ENCODE measurements at regions of chr17 and their contacts with region 1.

Region 1: DNA sequence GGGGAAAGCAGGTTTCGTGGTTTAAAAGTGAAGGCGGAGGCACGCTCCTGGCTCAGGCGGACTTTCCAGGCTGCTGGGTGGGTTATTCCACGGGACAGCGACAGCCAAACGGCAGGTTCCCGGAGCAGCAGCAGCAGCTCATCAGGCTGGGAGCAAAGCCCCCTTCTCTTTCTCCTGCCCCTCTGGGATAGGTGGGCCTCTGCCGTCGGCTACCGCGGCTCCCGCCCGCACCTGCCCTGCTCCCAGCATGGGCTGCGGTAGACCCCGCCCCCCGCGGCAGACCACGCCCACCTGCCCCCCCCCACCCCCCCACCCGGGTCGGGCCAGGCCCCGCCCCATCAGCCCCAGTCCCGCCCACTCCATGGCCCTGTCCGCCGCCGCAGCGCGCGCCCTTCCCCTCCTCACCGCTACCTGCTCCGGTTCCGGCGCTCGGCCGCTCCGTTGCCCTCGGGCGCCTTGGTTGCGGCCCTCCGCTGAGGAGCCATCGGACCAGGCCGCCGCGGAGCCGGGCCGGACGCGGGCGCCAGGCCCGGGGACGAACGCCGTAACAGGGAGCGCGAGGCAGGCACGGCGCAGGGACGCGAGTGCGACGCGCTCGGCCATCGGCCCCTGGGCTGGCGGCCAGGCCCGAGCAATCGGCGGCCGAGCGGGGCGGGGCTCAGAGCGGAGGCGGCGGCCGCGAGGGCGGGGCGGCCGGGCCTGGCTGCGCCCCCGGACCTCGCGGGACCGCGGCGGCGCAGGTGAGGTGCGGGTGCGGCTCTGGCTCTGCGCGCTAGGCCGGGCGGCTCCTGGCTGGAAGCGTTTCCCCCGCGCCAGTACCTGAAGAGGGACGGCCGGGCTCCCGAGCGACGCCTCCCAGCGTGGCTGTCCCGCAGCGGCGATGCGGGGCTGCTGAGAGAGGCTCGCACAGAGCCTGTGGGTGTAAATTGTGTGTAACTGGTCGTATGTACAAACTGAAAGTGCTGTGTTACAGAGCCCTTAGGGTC is at the starts of genes HEXD and OGFOD3:
- DNase-seq: peak; percentile 89
- H3K4me3 ChIP-seq: peak within 1 kb of the TSS; percentile 88 to 97 (median 88)
- H3K27ac ChIP-seq: peak within 1 kb of the TSS; percentile 71
- H3K4me1 ChIP-seq: peaks cover 13% of the 10 kb centered on the region
- H3K27me3 ChIP-seq: no peaks in the 10 kb centered on the region
- CTCF ChIP-seq: no peak
- total RNA-seq, gene HEXD: 6.3 to 13.0 TPM
- total RNA-seq, gene OGFOD3: 18.5 to 25.6 TPM

Region 2: DNA sequence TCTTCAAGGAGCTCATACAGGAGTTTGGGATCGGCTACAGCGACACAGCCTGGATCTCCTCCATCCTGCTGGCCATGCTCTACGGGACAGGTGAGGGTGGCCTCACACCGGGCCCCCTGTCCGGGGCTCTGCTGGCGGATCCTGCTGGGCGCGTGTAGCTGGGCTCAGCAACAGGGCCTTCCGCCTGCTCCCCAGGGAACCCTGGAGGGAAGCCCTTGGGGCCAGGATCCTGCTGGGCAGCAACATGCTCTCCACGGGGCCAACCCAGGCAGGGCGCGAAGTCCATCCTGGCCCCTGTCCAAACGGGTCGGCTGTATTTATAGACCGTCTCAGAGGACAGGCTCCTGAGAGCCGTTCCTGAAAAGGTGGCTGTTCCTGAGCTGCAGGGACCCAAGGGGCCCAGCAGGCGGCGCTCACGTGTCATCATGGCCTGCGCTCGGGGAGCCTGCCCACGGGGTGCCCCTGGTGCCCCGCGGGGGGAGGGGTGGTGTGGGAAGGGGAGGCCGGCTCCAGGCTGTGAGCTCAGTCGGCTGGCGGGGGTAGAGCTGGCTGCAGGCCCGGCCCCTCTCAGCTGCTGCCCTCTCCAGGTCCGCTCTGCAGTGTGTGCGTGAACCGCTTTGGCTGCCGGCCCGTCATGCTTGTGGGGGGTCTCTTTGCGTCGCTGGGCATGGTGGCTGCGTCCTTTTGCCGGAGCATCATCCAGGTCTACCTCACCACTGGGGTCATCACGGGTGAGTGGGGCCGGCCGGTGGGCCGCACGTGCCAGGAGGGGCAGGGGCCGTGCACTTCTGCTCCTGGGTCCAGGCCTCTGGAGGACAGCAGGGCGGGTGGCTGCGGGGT is 181.9 kb before region 1 on chr17:
- CTCF ChIA-PET with region 1: no interaction called
- dilution Hi-C with region 1: no loop called
- in situ Hi-C with region 1: no loop called
- intact Hi-C with region 1: loop called (anchors 1 kb)
- DNase-seq: peak; percentile 37
- H3K4me3 ChIP-seq: no peak overlapping the region
- H3K27ac ChIP-seq: no peak overlapping the region
- H3K4me1 ChIP-seq: peaks cover 82% of the 10 kb centered on the region
- H3K27me3 ChIP-seq: no peaks in the 10 kb centered on the region
- CTCF ChIP-seq: peak; percentile 67 to 84

Region 3: DNA sequence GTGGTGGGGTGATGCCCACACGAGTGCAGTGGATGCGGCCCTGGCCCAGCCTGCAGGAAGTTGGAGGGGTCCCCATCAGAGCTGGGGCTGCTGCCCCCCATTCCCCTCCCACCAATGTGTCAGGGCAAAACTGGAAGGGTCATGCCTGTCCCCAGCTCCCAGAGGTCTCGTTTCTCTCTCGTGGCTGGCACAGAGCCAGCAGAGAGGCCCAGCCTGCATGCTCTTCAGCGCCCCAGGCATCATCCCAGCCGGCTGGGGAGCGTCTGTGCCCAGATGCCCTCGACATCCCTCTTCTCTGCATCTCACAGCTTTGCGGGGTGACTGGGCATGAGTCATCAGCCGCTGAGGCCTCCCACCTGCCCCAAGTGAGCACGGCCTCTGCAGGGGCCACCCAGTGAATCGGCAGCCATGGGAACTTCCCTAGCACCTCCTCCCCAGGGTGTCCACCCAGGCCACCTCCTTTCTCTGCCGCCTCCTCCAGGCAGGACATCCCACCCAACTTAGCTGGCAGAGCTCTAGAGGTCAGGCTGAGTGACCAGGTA is 135.0 kb before region 1 on chr17:
- CTCF ChIA-PET with region 1: no interaction called
- dilution Hi-C with region 1: no loop called
- in situ Hi-C with region 1: no loop called
- intact Hi-C with region 1: no loop called
- DNase-seq: peak; percentile 94
- H3K4me3 ChIP-seq: no peak overlapping the region
- H3K27ac ChIP-seq: peak overlapping the region; percentile 49
- H3K4me1 ChIP-seq: peaks cover 42% of the 10 kb centered on the region
- H3K27me3 ChIP-seq: no peaks in the 10 kb centered on the region
- CTCF ChIP-seq: no peak

Region 4: DNA sequence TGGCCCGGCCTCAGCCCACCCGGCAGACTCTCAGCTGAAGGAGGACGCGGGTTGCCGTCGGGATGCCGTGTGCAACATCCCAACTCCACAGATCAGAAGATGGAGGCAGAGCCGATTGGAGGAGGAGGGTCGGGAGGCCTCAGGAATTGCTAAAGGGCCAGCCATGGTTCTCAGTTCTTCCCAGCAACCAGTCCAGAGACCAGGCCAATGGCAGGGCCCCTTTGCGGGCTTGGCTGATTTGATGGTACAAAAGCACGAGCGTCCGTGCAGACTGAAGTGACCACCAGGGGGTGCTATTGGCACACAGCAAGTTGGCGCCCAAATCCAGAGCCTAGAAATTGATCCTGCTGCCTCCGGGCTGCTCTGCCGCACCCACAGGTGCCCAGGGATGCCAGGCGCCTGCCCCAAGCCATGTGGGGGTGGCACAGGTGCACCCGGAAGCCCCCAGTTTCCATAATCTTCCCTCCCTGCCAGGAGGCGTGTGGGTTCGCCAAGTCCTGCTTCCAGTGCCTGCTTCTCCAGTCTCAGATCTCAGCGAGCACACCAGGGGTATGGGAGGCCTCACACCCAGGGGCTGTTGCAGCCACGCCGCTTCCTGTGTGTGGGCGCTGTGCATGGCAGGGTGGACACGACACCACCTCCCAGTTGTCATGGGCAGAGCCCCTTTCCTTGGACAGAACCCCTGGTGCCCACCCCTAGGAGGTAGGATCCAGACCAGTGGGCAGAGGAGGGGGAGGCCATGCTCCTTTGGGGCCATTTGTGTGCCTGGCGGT is 66.4 kb before region 1 on chr17:
- CTCF ChIA-PET with region 1: no interaction called
- dilution Hi-C with region 1: no loop called
- in situ Hi-C with region 1: loop called in 1 of 2 experiments (anchors 10 kb)
- intact Hi-C with region 1: loop called (anchors 1 kb)
- DNase-seq: peak; percentile 64
- H3K4me3 ChIP-seq: no peak overlapping the region
- H3K27ac ChIP-seq: no peak overlapping the region
- H3K4me1 ChIP-seq: peaks cover 20% of the 10 kb centered on the region
- H3K27me3 ChIP-seq: no peaks in the 10 kb centered on the region
- CTCF ChIP-seq: peak; percentile 86 to 94

Region 5: DNA sequence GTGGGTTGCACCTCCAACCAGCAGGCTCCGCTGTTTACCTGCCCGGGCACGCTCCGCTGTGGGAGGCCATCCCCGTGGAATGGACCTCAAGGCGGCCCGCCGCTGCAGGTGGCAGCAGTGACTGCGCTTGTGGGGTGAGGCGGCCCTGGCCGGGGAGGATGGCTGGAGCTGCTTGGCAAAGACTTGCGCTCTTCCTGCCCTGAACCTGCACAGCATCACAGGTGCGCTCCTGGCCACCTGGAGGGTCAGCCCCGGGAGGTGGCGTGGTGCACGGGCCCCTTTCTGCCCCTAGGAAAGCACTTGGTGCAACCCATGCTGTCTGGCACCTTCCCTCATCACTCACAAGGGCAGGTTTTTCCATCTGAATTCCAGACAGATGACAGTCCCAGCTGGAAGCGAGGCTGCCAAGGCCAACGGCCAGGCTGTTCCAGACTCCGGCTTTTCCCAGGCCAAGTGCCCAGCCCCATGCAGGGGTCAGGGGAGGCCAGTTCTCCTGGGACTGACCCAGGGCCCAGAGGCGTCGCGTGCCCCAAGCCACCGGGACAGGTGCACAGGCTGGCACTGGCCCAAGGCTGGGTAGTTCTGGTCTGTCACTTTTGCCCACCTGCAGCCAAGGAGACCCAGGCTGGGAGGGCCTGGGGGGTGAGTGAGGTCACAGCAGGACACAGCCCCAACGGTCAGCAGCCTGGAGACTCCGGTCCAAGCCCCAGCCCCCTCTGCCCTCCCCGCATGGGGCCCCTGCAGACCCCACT is 33.4 kb before region 1 on chr17:
- CTCF ChIA-PET with region 1: no interaction called
- dilution Hi-C with region 1: no loop called
- in situ Hi-C with region 1: no loop called
- intact Hi-C with region 1: loop called (anchors 1 kb)
- DNase-seq: peak; percentile 84
- H3K4me3 ChIP-seq: peak overlapping the region in 1 of 3 experiments; percentile 14
- H3K27ac ChIP-seq: no peak overlapping the region
- H3K4me1 ChIP-seq: peaks cover 24% of the 10 kb centered on the region
- H3K27me3 ChIP-seq: no peaks in the 10 kb centered on the region
- CTCF ChIP-seq: peak; percentile 15 to 57

Region 6: GRCh38 chr17:82483836-82484235 is 65.5 kb after region 1 on chr17:
- CTCF ChIA-PET with region 1: no interaction called
- dilution Hi-C with region 1: loop called (anchors 5 kb)
- in situ Hi-C with region 1: no loop called
- intact Hi-C with region 1: no loop called
- DNase-seq: no peak
- H3K4me3 ChIP-seq: no peak overlapping the region
- H3K27ac ChIP-seq: no peak overlapping the region
- H3K4me1 ChIP-seq: peaks cover 6% of the 10 kb centered on the region
- H3K27me3 ChIP-seq: no peaks in the 10 kb centered on the region
- CTCF ChIP-seq: no peak

Region 7: DNA sequence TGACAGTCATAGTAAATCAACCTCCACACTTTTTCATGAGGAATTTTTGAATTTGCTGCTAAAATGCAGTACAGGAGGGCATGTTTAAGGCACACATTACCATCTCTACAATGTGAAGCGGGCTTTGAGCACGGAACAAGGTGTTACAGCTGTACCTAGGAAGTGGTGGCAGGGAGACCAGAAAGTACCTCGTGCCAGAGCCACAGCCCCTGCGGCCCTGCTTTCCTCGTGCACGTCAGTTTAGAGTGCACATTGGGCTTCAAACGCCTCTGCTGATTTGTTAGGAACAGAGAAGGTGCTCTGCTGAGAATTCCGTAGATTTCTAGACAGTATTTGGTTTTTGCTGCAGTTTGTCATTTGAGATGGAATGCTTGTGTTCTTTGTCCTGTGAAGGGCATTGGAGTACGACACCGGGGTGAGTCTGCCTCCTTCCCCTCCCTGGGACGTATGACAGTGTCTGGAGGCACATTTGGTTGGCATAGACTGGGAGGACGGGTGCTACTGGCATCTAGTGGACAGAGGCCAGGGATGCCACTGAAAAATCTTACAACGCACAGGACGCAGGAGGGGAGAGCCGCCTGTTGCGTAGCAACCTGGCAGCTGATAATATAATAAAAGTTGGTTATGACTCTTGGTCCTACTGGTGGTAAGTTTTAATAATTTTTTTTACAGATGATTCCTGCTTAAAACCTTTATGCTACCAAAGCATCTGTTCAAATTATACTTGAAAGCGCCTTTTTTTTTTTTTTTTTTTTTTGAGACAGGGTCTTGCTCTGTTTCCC is 110.4 kb after region 1 on chr17:
- CTCF ChIA-PET with region 1: interaction called, 6 read pairs
- dilution Hi-C with region 1: no loop called
- in situ Hi-C with region 1: no loop called
- intact Hi-C with region 1: loop called (anchors 1 kb)
- DNase-seq: peak; percentile 87
- H3K4me3 ChIP-seq: peak overlapping the region in 1 of 3 experiments; percentile 5
- H3K27ac ChIP-seq: peak overlapping the region; percentile 89
- H3K4me1 ChIP-seq: peaks cover 50% of the 10 kb centered on the region
- H3K27me3 ChIP-seq: no peaks in the 10 kb centered on the region
- CTCF ChIP-seq: peak; percentile 90 to 93

Region 8: GRCh38 chr17:82559566-82560251 is 141.4 kb after region 1 on chr17:
- CTCF ChIA-PET with region 1: no interaction called
- dilution Hi-C with region 1: loop called (anchors 10 kb)
- in situ Hi-C with region 1: no loop called
- intact Hi-C with region 1: no loop called
- DNase-seq: no peak
- H3K4me3 ChIP-seq: no peak overlapping the region
- H3K27ac ChIP-seq: no peak overlapping the region
- H3K4me1 ChIP-seq: no peaks in the 10 kb centered on the region
- H3K27me3 ChIP-seq: no peaks in the 10 kb centered on the region
- CTCF ChIP-seq: no peak

Measured in mammary epithelial cell (primary cell).